ENCODE measurements at regions of chr3 and their contacts with region 1.

Region 1: DNA sequence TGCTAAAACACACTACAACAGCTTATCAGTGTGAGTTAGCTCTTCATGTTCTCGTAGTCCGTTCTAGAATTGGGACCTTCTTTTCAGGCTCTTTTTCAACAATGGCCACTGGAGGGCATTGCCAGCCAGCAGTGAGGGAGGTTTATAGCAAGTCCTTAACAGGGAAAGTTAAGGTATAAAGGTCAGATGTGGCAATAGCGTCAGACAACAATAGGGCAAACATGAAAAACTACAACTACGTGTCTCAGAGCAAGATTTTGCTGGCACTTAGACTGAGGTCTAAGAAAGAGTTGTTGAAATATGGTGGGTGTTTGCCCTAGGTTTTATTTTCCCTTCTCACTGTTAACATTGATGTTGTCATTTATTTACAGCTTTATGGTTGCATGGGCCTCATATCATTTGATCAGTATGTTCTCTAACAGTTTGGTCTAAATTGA is 161.4 kb downstream of the GMNC start:
- DNase-seq: no peak
- H3K4me3 Mint-ChIP-seq: no peak overlapping the region
- H3K27ac Mint-ChIP-seq: no peak overlapping the region
- H3K4me1 Mint-ChIP-seq: peaks cover 5% of the 10 kb centered on the region
- H3K27me3 Mint-ChIP-seq: peaks cover 31% of the 10 kb centered on the region

Region 2: GRCh38 chr3:189898559-189899153 is 802.5 kb before region 1 on chr3:
- intact Hi-C with region 1: no loop called
- DNase-seq: no peak
- H3K4me3 Mint-ChIP-seq: no peak overlapping the region
- H3K27ac Mint-ChIP-seq: no peak overlapping the region
- H3K4me1 Mint-ChIP-seq: no peaks in the 10 kb centered on the region
- H3K27me3 Mint-ChIP-seq: peaks cover 1% of the 10 kb centered on the region

Region 3: GRCh38 chr3:189961525-189962161 is 739.5 kb before region 1 on chr3:
- intact Hi-C with region 1: loop called (anchors 10 kb)
- DNase-seq: peak; percentile 91
- H3K4me3 Mint-ChIP-seq: no peak overlapping the region
- H3K27ac Mint-ChIP-seq: no peak overlapping the region
- H3K4me1 Mint-ChIP-seq: peaks cover 11% of the 10 kb centered on the region
- H3K27me3 Mint-ChIP-seq: peaks cover 15% of the 10 kb centered on the region

Region 4: DNA sequence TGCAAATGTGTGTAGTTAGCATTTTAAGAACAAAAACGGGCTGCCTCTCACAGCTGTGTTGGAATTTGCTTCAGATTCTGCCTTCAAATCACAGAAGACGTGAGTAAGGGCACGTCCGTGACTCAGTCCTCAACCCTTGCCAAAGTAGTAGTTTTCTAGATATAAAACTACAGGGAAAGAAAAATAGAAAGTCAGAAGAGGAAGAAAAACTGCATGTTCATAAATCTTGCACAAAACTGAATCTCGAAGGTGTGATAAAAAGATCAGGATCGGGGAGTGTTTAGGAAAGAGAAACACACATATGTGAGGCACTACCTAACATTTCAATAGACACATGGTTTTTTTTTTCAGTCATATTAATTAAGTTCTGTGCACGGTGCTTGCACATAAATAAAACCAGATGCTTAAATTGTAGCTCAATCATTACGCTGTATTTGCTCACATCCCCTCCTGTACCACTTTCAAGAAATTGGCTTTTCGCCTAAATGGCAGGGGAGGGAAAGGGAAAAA is 652.1 kb before region 1 on chr3:
- intact Hi-C with region 1: no loop called
- DNase-seq: no peak
- H3K4me3 Mint-ChIP-seq: no peak overlapping the region
- H3K27ac Mint-ChIP-seq: no peak overlapping the region
- H3K4me1 Mint-ChIP-seq: no peaks in the 10 kb centered on the region
- H3K27me3 Mint-ChIP-seq: peaks cover 5% of the 10 kb centered on the region

Region 5: GRCh38 chr3:190424478-190425439 is 276.4 kb before region 1 on chr3:
- intact Hi-C with region 1: loop called (anchors 5 kb)
- DNase-seq: peak; percentile 72
- H3K4me3 Mint-ChIP-seq: no peak overlapping the region
- H3K27ac Mint-ChIP-seq: no peak overlapping the region
- H3K4me1 Mint-ChIP-seq: peaks cover 2% of the 10 kb centered on the region
- H3K27me3 Mint-ChIP-seq: peaks cover 5% of the 10 kb centered on the region

Region 6: DNA sequence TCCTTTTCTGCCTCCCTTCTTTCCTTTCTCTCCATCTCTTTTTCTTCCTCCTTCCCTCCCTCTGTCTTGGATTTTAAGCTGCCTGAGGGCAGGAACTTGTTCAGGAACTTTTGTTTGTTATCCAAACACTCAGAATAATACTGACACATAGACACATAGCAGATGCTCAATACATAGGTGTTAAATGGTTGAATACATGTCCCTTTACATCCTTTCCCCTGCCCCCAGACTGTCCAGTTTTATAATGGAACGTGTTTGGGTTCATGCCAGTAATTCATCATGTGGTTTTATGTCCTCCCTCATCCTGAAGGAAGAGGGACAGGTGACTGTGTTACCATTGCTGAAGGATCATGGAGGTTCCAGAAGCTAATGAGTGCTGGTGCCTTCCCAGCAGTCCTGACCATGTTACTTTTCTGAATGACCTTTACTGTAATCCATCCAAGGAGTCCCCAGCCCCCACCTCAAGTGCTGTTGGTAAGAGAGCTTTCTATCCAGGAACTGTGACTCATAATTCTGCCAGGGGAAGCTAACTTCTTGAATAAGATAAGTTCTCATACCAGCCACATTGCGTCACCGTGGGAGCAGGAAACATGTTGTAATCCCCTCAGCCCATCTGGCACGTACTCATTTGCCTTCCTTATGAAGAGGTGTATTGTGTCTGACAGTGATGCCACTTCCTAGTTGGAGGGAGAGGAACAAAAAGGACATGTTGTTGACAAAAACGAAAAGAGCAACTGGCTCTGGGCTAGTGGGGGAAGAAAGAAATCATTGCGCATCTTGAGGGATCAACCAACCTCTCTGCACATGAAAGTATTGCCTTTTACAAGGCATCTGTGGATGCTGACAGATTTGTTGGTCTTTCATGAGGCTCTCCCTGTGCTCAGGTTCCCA is 134.8 kb before region 1 on chr3:
- intact Hi-C with region 1: loop called (anchors 5 kb)
- DNase-seq: peak; percentile 90
- H3K4me3 Mint-ChIP-seq: peak overlapping the region; percentile 41
- H3K27ac Mint-ChIP-seq: peak overlapping the region; percentile 94
- H3K4me1 Mint-ChIP-seq: peaks cover 69% of the 10 kb centered on the region
- H3K27me3 Mint-ChIP-seq: no peaks in the 10 kb centered on the region

Region 7: GRCh38 chr3:190617185-190617584 is 83.9 kb before region 1 on chr3:
- intact Hi-C with region 1: loop called (anchors 2 kb)
- DNase-seq: peak; percentile 88
- H3K4me3 Mint-ChIP-seq: peak overlapping the region; percentile 56
- H3K27ac Mint-ChIP-seq: peak overlapping the region; percentile 91
- H3K4me1 Mint-ChIP-seq: peaks cover 69% of the 10 kb centered on the region
- H3K27me3 Mint-ChIP-seq: no peaks in the 10 kb centered on the region

Region 8: DNA sequence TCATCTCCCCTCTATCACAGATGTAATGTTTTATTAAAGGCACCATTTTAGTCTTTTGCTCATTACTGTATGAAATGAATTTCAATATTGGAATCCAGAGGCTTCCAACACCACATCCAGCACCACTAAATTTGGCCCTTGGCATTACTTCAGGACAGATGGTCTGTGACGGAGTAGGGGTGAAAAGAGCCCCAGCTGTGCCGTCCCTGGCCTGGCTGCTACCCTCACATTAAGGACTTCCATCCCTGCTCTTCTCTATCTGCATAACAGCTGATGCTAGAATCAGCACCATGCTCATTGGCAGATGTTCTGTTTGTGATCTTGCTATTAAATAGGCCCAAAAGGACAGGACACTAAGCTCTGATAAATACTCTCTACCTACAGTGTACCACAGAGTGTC is 34.3 kb before region 1 on chr3:
- intact Hi-C with region 1: no loop called
- DNase-seq: no peak
- H3K4me3 Mint-ChIP-seq: no peak overlapping the region
- H3K27ac Mint-ChIP-seq: no peak overlapping the region
- H3K4me1 Mint-ChIP-seq: no peaks in the 10 kb centered on the region
- H3K27me3 Mint-ChIP-seq: peaks cover 14% of the 10 kb centered on the region